Natural killer cell (primary cell): ENCODE measurements at regions of chr1 and their contacts with region 1.

Region 1: GRCh38 chr1:8560611-8561544 is 243.0 kb downstream of the SLC45A1 start:
- DNase-seq: peak in 1 of 2 donors; percentile 76
- ATAC-seq: peak; percentile 81 to 96 (median 87)
- H3K4me3 ChIP-seq: no peak overlapping the region
- H3K4me3 Mint-ChIP-seq: no peak overlapping the region
- H3K27ac ChIP-seq: no peak overlapping the region
- H3K27ac Mint-ChIP-seq: peak overlapping the region in 1 of 2 donors; percentile 11
- H3K4me1 ChIP-seq: no peaks in the 10 kb centered on the region
- H3K4me1 Mint-ChIP-seq: peaks cover 13 to 22% of the 10 kb centered on the region in 2 donors
- H3K27me3 ChIP-seq: no peaks in the 10 kb centered on the region
- H3K27me3 Mint-ChIP-seq: no peaks in the 10 kb centered on the region
- CTCF ChIP-seq: peak; percentile 96

Region 2: DNA sequence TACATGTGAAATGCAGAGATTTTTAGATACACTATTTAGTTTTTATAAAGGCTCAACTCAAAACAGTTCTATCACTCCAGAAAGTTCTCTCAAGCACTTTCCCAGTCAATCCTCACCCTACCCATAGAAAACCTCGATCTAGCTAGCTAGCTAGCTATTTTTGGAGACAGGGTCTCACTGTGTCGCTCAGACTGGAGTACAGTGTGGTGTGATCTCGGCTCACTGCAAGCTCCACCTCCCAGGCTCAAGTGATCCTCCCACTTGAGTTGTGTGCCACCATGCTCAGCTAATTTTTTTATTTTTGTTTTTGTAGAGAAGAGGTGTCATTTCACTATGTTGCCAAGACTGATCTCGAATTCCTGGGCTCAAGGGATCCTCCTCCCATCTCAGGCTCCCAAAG is 19.7 kb after region 1 on chr1:
- intact Hi-C with region 1: no loop called
- DNase-seq: no peak
- ATAC-seq: no peak
- H3K4me3 ChIP-seq: no peak overlapping the region
- H3K4me3 Mint-ChIP-seq: no peak overlapping the region
- H3K27ac ChIP-seq: no peak overlapping the region
- H3K27ac Mint-ChIP-seq: no peak overlapping the region
- H3K4me1 ChIP-seq: no peaks in the 10 kb centered on the region
- H3K4me1 Mint-ChIP-seq: peaks cover 15 to 17% of the 10 kb centered on the region in 2 donors
- H3K27me3 ChIP-seq: no peaks in the 10 kb centered on the region
- H3K27me3 Mint-ChIP-seq: no peaks in the 10 kb centered on the region
- CTCF ChIP-seq: no peak

Region 3: DNA sequence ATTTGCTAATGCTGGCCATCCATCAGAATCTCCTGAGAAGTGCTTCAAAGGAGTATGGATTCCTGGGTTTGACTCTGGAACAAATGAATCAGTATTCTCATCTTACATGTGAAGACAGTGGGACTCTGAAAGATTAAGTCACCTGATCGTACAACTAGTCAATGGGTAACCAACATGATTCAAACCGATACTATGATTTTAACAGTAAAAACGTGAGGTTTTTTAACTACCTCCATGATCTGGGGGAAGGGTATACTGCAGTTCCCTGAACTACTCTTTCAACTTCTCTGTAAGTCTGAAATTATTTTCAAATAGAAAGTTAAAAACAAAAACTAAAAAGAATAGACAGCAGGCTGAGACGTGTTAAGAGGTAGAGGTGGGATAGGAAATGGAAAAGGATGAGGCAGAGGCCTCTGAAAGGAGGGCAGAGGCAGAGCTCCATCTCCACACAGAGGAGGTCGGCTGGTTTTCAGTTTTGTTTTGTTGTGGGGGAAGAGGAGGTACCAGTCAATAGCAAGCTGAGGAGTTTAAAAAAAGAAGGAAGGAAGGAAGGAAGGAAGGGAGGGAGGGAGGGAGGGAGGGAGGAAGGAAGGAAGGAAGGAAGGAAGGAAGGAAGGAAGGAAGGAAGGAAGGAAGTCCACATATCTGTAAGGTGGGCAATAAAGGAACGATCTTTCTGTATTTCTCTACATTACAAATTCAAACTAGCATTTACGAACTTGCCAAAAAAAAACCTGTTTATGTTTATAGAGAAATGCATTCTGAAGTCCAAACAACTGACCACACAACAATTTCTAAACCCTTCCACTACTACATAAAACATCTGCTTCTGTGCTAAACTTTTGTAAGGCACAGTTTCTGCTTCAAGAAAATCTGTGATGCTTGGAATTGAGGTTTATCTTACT is 43.4 kb after region 1 on chr1:
- intact Hi-C with region 1: loop called (anchors 5 kb)
- DNase-seq: peak in 1 of 2 donors; percentile 36
- ATAC-seq: peak; percentile 21 to 61 (median 52)
- H3K4me3 ChIP-seq: no peak overlapping the region
- H3K4me3 Mint-ChIP-seq: peak overlapping the region; percentile 82
- H3K27ac ChIP-seq: peak overlapping the region; percentile 48
- H3K27ac Mint-ChIP-seq: peak overlapping the region; percentile 86 to 94
- H3K4me1 ChIP-seq: peaks cover 22% of the 10 kb centered on the region
- H3K4me1 Mint-ChIP-seq: peaks cover 44% of the 10 kb centered on the region in 2 donors
- H3K27me3 ChIP-seq: no peaks in the 10 kb centered on the region
- H3K27me3 Mint-ChIP-seq: no peaks in the 10 kb centered on the region
- CTCF ChIP-seq: no peak

Region 4: GRCh38 chr1:8671306-8671917 is 110.5 kb after region 1 on chr1:
- intact Hi-C with region 1: loop called (anchors 1 kb)
- DNase-seq: peak in 1 of 2 donors; percentile 70
- ATAC-seq: peak in 2 of 3 donors; percentile 68 to 77
- H3K4me3 ChIP-seq: no peak overlapping the region
- H3K4me3 Mint-ChIP-seq: peak overlapping the region; percentile 11
- H3K27ac ChIP-seq: no peak overlapping the region
- H3K27ac Mint-ChIP-seq: peak overlapping the region; percentile 29 to 74
- H3K4me1 ChIP-seq: peaks cover 6% of the 10 kb centered on the region
- H3K4me1 Mint-ChIP-seq: peaks cover 39 to 42% of the 10 kb centered on the region in 2 donors
- H3K27me3 ChIP-seq: no peaks in the 10 kb centered on the region
- H3K27me3 Mint-ChIP-seq: no peaks in the 10 kb centered on the region
- CTCF ChIP-seq: peak; percentile 84

Region 5: GRCh38 chr1:8727809-8728213 is 166.9 kb after region 1 on chr1:
- intact Hi-C with region 1: loop called (anchors 1 kb)
- DNase-seq: no peak
- ATAC-seq: no peak
- H3K4me3 ChIP-seq: no peak overlapping the region
- H3K4me3 Mint-ChIP-seq: no peak overlapping the region
- H3K27ac ChIP-seq: no peak overlapping the region
- H3K27ac Mint-ChIP-seq: peak overlapping the region in 1 of 2 donors; percentile 19
- H3K4me1 ChIP-seq: peaks cover 3% of the 10 kb centered on the region
- H3K4me1 Mint-ChIP-seq: peaks cover 9 to 21% of the 10 kb centered on the region in 2 donors
- H3K27me3 ChIP-seq: no peaks in the 10 kb centered on the region
- H3K27me3 Mint-ChIP-seq: no peaks in the 10 kb centered on the region
- CTCF ChIP-seq: no peak

Region 6: GRCh38 chr1:8848663-8849386 is 287.9 kb after region 1 on chr1:
- intact Hi-C with region 1: loop called (anchors 1 kb)
- DNase-seq: peak; percentile 76 to 86
- ATAC-seq: peak; percentile 90 to 99 (median 98)
- H3K4me3 ChIP-seq: no peak overlapping the region
- H3K4me3 Mint-ChIP-seq: no peak overlapping the region
- H3K27ac ChIP-seq: no peak overlapping the region
- H3K27ac Mint-ChIP-seq: no peak overlapping the region
- H3K4me1 ChIP-seq: peaks cover 6% of the 10 kb centered on the region
- H3K4me1 Mint-ChIP-seq: no peaks in the 10 kb centered on the region
- H3K27me3 ChIP-seq: no peaks in the 10 kb centered on the region
- H3K27me3 Mint-ChIP-seq: no peaks in the 10 kb centered on the region
- CTCF ChIP-seq: peak; percentile 95